IMR-90 (cell line): ENCODE measurements at regions of chr6 and their contacts with region 1.

Region 1: GRCh38 chr6:45494416-45495135 is 116.8 kb upstream of the SUPT3H start:
- DNase-seq: no peak
- ATAC-seq: no peak
- H3K4me3 ChIP-seq: no peak overlapping the region
- H3K27ac ChIP-seq: no peak overlapping the region
- H3K4me1 ChIP-seq: peaks cover 16% of the 10 kb centered on the region
- H3K27me3 ChIP-seq: no peaks in the 10 kb centered on the region
- CTCF ChIP-seq: no peak
- POLR2A ChIP-seq: no peak
- RAD21 ChIP-seq: no peak

Region 2: DNA sequence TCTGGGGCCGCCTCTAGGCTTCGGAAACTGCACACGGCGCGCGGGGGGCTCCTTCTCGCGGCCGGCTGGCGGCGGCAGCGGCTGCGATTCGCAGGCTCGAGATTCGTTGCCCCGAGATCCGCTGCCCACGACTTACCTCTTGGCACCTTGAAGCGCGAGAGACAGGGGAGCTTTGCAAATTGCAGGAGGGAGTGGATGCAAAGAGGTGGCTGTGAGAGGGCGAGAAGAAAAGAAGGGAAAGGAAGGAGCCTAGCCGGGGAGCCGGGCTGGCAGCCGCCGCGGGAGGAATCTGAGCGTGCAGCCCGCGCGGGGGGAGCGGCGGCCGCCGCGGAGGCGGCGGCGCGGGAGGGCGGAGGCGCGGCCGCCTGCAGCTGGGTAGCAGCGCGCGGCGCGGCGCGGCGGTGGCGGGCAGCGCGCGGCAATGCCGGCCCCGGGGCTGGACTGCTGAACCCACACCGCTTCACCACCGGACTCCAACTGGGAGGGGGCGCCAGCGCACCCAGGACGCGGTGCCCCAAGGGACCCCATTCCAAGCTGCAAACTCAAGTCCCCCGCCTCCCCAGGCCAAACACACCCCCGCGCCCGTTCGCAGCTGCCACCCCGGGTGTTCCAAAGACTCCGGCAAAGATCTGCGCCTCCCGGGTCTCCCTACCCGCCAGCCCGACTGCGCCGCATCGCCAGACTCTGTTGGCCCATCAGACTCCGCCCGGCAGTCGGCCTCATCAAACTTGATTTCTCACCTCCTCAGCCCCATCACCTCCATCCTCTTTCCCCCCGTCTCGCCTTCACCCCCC is 72.7 kb before region 1 on chr6:
- CTCF ChIA-PET with region 1: no interaction called
- POLR2A ChIA-PET with region 1: no interaction called
- dilution Hi-C with region 1: no loop called
- in situ Hi-C with region 1: no loop called
- intact Hi-C with region 1: no loop called
- DNase-seq: peak; percentile 67
- ATAC-seq: peak; percentile 81
- H3K4me3 ChIP-seq: peak overlapping the region; percentile 99
- H3K27ac ChIP-seq: peak overlapping the region; percentile 95
- H3K4me1 ChIP-seq: peaks cover 11% of the 10 kb centered on the region
- H3K27me3 ChIP-seq: no peaks in the 10 kb centered on the region
- CTCF ChIP-seq: peak; percentile 38
- POLR2A ChIP-seq: no peak
- RAD21 ChIP-seq: peak; percentile 42

Region 3: GRCh38 chr6:45445749-45446549 is 48.6 kb before region 1 on chr6:
- CTCF ChIA-PET with region 1: interaction called, 3 read pairs
- POLR2A ChIA-PET with region 1: no interaction called
- dilution Hi-C with region 1: no loop called
- in situ Hi-C with region 1: no loop called
- intact Hi-C with region 1: loop called (anchors 5 kb)
- DNase-seq: peak; percentile 99
- ATAC-seq: peak; percentile 81
- H3K4me3 ChIP-seq: no peak overlapping the region
- H3K27ac ChIP-seq: peak overlapping the region; percentile 94
- H3K4me1 ChIP-seq: peaks cover 25% of the 10 kb centered on the region
- H3K27me3 ChIP-seq: no peaks in the 10 kb centered on the region
- CTCF ChIP-seq: no peak
- POLR2A ChIP-seq: no peak
- RAD21 ChIP-seq: peak; percentile 1; the same call in 1 of the 2 replicates